ENCODE measurements at regions of chr11 and their contacts with region 1.

Region 1: DNA sequence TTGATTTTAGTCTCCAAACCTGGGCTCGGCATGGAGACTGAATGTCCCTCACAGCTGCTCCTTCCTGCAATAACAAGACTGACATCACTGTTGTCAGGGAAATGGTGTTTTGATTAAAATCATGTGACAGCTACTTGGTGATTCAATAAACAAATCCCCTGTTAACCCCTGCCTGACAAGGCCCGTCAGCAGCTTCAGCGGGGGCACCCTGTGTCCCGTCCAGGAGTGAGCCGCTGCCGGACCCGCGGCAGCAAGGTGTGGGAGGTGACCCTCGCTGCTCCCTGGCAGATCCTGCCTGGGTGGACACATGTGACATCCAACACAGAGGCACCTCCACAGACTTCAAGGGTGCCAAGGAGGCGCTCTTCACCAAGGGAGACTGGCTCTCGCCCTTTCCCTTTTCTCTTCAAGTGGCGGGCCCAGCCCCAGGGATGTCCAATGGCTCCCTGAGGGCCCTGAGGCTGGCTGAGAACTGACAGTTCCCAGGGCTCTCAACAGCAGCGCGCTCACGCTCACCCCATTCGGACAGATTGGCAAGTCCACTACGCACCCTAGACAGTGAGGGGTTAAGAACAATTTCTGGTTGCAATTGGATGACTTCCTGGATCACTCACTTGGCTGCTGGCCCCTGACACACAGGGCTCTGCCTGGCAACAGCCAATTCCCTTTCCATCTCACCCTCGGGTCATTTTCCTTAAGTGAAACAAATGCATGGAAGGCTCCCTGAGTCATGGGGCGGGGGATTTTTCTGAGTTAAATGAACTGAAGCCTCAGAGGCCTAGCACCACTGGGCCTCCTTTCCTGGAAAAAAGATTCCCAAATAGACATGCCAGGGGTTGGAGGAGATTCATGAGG is 30.7 kb downstream of the PPP2R1B start:
- DNase-seq: peak; percentile 66 to 75
- ATAC-seq: peak; percentile 34 to 59
- H3K4me3 ChIP-seq: peak overlapping the region; percentile 42 to 58 (median 54)
- H3K27ac ChIP-seq: peak overlapping the region; percentile 85 to 97 (median 96)
- H3K4me1 ChIP-seq: peaks cover 81 to 82% of the 10 kb centered on the region in 2 donors
- H3K27me3 ChIP-seq: no peaks in the 10 kb centered on the region
- CTCF ChIP-seq: no peak
- POLR2A ChIP-seq: peak; percentile 65 to 79

Region 2: GRCh38 chr11:111694851-111695250 is 40.6 kb before region 1 on chr11:
- in situ Hi-C with region 1: no loop called
- intact Hi-C with region 1: loop called (anchors 1 kb)
- DNase-seq: peak in 1 of 2 donors; percentile 40
- ATAC-seq: peak; percentile 68 to 84
- H3K4me3 ChIP-seq: peak overlapping the region in 1 of 4 donors; percentile 0
- H3K27ac ChIP-seq: peak overlapping the region; percentile 65 to 81 (median 68)
- H3K4me1 ChIP-seq: peaks cover 33 to 56% of the 10 kb centered on the region in 2 donors
- H3K27me3 ChIP-seq: no peaks in the 10 kb centered on the region
- CTCF ChIP-seq: no peak
- POLR2A ChIP-seq: no peak

Region 3: GRCh38 chr11:111766093-111766833 is 30.8 kb after region 1 on chr11 and contains the start of gene PPP2R1B:
- in situ Hi-C with region 1: no loop called
- intact Hi-C with region 1: loop called (anchors 1 kb)
- DNase-seq: peak; percentile 55 to 67
- ATAC-seq: peak; percentile 94 to 95
- H3K4me3 ChIP-seq: peak within 1 kb of the TSS; percentile 84 to 97 (median 94)
- H3K27ac ChIP-seq: peak within 1 kb of the TSS; percentile 89 to 94 (median 92)
- H3K4me1 ChIP-seq: peaks cover 14 to 15% of the 10 kb centered on the region in 2 donors
- H3K27me3 ChIP-seq: no peaks in the 10 kb centered on the region
- CTCF ChIP-seq: no peak
- POLR2A ChIP-seq: peak; percentile 45 to 65
- total RNA-seq, gene PPP2R1B: 7.3 to 16.0 (median 9.4) TPM

Region 4: DNA sequence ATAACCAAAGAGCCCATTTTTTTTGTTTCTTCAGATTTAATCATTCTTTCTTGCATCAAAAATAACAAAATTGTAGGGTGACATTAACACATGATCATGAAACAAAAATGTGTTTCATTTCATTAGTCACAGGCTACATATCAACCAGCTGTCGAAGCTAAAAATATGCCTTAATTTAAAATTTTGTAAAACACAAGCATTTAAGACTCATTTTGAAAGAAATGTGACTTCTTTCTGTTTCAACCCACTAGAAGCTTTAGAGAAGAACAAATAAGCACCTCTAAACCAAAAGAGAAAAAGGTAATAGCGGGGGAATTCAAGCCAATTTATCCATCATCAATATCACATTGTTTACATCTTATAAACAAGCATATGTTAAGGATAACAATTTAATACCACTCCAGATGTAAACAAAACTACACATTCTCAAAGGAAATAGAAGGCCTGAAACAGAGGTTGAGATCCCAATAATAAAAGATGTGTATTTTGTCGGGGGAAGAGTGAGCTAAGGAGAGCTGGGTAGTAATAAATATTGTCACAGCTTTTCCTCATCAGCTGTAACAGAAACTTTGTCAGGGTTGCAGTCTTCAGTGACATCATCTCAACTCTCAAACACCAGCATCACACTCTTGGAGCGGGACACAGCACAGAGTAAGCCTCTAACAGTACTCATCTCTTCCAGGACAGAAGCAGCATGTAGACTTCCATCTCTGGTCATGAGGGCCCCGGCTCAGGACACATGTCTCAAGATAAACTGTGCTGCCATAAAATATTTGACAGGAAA is 93.9 kb after region 1 on chr11:
- in situ Hi-C with region 1: no loop called
- intact Hi-C with region 1: loop called (anchors 5 kb)
- DNase-seq: no peak
- ATAC-seq: no peak
- H3K4me3 ChIP-seq: no peak overlapping the region
- H3K27ac ChIP-seq: peak overlapping the region in 3 of 4 donors; percentile 6 to 89 (median 67)
- H3K4me1 ChIP-seq: peaks cover 17 to 42% of the 10 kb centered on the region in 2 donors
- H3K27me3 ChIP-seq: no peaks in the 10 kb centered on the region
- CTCF ChIP-seq: no peak
- POLR2A ChIP-seq: no peak

Region 5: DNA sequence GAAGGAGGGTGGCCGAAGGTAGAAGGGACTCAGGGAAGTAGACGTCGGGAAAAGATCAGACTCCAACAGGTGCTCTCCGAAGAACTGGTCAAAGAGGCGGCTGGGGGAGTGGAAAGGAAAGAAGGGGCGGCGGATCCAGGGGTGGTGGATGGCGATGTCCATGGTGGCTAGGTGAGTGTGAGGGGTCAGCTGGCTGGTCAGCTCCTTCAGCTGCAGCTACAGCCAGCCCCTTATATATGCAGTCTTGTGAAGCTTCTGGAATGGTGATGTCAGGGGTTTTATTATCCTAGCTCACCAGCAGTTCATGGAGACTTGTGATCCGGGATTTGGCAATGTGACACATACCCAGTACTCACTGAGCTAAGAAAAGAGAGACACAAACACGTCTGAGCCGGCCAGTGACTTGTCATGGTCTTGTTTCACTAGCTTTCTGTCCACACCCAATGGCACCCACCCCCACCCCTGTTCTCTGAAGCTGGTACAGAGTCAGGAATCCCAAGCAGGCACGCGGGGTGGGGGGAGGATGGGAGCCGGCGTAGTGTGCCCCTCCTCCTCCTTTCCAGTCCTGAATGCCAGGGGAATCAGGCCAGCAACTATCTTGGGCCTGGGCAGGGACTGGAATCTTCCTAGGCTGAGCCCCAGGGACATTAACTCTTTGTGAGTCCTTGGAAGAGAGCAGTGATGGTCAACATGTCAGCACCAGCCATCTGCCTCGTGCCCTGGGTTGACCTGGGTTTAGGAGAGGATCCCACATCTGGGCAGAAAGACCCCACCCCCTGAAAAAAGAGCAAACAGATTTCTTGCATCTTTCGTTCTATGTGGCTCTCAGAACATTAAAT is 176.3 kb after region 1 on chr11 and contains the start of gene CRYAB:
- in situ Hi-C with region 1: no loop called
- intact Hi-C with region 1: loop called (anchors 5 kb)
- DNase-seq: peak; percentile 97 to 99
- ATAC-seq: peak; percentile 87
- H3K4me3 ChIP-seq: peak within 1 kb of the TSS; percentile 70 to 79 (median 74)
- H3K27ac ChIP-seq: peak within 1 kb of the TSS; percentile 91 to 97 (median 97)
- H3K4me1 ChIP-seq: peaks cover 22 to 45% of the 10 kb centered on the region in 2 donors
- H3K27me3 ChIP-seq: no peaks in the 10 kb centered on the region
- CTCF ChIP-seq: no peak
- POLR2A ChIP-seq: peak; percentile 98 to 99
- total RNA-seq, gene CRYAB: 763 to 2,291 (median 1,427) TPM